ENCODE measurements at regions of chr11 and their contacts with region 1.

Region 1: GRCh38 chr11:2305140-2305840 is 3.5 kb downstream of the TSPAN32 start:
- DNase-seq: peak; percentile 87 to 92
- ATAC-seq: peak; percentile 87 to 94 (median 90)
- H3K4me3 ChIP-seq: no peak overlapping the region
- H3K27ac ChIP-seq: no peak overlapping the region
- H3K4me1 ChIP-seq: peaks cover 7% of the 10 kb centered on the region
- H3K27me3 ChIP-seq: no peaks in the 10 kb centered on the region
- CTCF ChIP-seq: peak; percentile 86

Region 2: DNA sequence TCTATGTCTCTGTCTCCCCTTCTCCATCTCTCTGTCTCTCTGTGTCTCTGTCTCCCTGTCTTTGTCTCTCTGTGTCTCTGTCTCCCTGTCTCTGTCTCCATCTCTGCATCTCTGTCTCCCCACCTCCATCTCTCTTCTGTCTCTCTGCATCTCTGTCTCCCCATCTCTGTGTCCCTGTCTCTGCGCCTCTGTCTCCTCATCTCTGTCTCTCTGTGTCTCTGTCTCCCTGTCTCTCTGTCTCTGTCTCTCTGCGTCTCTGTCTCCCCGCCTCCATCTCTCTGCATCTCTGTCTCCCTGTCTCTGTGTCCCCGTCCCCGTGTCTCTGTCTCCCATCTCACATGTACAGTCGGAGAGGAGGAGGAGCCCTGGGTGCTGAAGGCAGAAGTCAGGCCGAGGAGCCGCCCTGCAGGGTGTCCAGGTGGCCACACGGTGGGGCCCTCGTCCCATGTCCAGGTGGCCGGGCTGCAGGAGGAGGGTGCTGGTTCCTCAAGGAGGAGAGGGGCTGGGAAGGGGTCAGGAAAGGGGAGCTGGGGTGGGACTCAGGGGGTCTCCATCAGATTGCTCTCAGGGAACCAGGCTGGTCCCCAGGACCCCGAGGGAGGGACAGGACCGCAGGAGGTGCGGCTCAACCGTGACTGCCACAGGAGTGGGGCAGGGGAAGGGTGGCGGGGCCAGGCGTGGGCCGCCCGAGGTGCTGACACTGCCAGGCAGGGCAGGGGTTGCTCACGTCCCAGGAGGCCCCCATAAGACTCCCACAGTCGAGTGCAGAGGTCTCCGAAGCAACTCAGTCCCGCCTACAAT is 108.1 kb before region 1 on chr11:
- intact Hi-C with region 1: loop called in 1 of 2 experiments (anchors 10 kb)
- DNase-seq: peak; percentile 62 to 79
- ATAC-seq: peak; percentile 68 to 79 (median 74)
- H3K4me3 ChIP-seq: no peak overlapping the region
- H3K27ac ChIP-seq: no peak overlapping the region
- H3K4me1 ChIP-seq: no peaks in the 10 kb centered on the region
- H3K27me3 ChIP-seq: peaks cover 0 to 30% (median 5%) of the 10 kb centered on the region in 3 donors
- CTCF ChIP-seq: peak; percentile 70

Region 3: DNA sequence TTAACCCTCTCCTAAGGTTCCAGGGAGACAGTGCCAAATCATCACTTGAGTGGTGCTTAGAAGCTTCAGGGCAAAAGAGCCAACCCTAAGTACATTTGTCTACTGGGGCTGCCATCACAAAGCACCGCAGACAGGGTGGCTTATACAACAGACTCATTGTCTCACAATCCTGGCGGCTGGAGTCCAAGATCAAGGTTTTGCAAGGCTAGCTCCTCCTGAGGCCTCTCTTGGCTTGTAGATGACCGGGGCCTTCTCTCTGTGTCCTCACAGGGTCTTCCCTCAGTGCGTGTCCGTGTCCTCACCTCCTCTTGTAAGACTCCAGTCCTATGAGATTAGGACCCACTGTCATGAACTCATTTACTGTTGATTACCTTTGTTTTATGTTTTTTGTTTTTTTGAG is 37.7 kb after region 1 on chr11:
- intact Hi-C with region 1: loop called in 1 of 2 experiments (anchors 2 kb)
- DNase-seq: peak in 1 of 2 donors; percentile 34
- ATAC-seq: no peak
- H3K4me3 ChIP-seq: no peak overlapping the region
- H3K27ac ChIP-seq: no peak overlapping the region
- H3K4me1 ChIP-seq: no peaks in the 10 kb centered on the region
- H3K27me3 ChIP-seq: no peaks in the 10 kb centered on the region
- CTCF ChIP-seq: no peak

Region 4: GRCh38 chr11:2420502-2421225 is 115.4 kb after region 1 on chr11:
- intact Hi-C with region 1: loop called (anchors 1 kb)
- DNase-seq: peak; percentile 72 to 86
- ATAC-seq: peak; percentile 92 to 98 (median 96)
- H3K4me3 ChIP-seq: no peak overlapping the region
- H3K27ac ChIP-seq: no peak overlapping the region
- H3K4me1 ChIP-seq: no peaks in the 10 kb centered on the region
- H3K27me3 ChIP-seq: peaks cover 0 to 6% (median 0%) of the 10 kb centered on the region in 3 donors
- CTCF ChIP-seq: peak; percentile 94

Region 5: DNA sequence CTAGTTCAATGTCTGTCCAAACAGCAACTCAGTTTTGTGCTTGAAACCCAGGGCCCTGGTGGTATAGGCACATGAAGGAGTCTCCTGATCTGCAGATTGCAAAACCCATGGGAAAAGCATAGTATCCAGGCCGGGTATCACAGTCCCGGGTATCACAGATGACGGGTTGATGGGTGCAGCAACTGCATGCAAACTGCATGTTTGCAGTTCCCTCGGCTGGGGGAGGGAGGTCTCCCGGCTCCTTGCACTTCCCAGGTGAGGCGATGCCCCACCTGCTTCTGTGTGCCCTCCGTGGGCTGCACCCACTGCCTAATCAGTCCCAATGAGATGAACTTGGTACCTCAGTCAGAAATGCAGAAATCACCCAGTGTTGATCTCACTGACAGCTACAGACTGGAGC is 193.5 kb after region 1 on chr11:
- intact Hi-C with region 1: no loop called
- DNase-seq: no peak
- ATAC-seq: no peak
- H3K4me3 ChIP-seq: no peak overlapping the region
- H3K27ac ChIP-seq: no peak overlapping the region
- H3K4me1 ChIP-seq: no peaks in the 10 kb centered on the region
- H3K27me3 ChIP-seq: peaks cover 0 to 23% (median 2%) of the 10 kb centered on the region in 3 donors
- CTCF ChIP-seq: no peak

Region 6: GRCh38 chr11:2526808-2527381 is 221.6 kb after region 1 on chr11:
- intact Hi-C with region 1: loop called in 1 of 2 experiments (anchors 5 kb)
- DNase-seq: peak; percentile 47 to 68
- ATAC-seq: no peak
- H3K4me3 ChIP-seq: no peak overlapping the region
- H3K27ac ChIP-seq: no peak overlapping the region
- H3K4me1 ChIP-seq: no peaks in the 10 kb centered on the region
- H3K27me3 ChIP-seq: peaks cover 0 to 18% (median 3%) of the 10 kb centered on the region in 3 donors
- CTCF ChIP-seq: no peak

Region 7: DNA sequence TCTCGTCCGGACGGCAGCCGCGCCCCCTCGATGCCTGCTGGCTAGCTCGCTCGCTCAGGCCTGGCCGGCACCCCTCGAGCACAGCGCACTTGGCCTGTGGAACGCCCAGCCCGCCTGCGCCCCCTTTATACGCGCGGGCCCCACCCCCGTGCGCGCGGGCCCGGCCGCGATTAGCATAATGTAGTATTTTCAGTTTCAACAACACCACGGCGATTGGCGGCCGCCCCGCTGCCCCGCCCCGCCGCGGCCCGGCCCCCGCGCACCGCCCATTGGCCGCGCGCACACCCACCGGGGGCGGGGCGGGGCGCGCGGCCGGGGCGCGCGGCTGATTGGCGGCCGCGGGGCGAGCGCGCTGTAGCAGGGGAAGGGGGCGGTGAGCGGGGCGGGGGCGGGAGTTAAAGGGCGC is 580.4 kb after region 1 on chr11 and contains the start of gene CDKN1C:
- intact Hi-C with region 1: loop called (anchors 5 to 10 kb)
- DNase-seq: peak; percentile 89 to 93
- ATAC-seq: peak; percentile 81 to 84 (median 82)
- H3K4me3 ChIP-seq: peak within 1 kb of the TSS; percentile 88
- H3K27ac ChIP-seq: peak within 1 kb of the TSS; percentile 81
- H3K4me1 ChIP-seq: peaks cover 16% of the 10 kb centered on the region
- H3K27me3 ChIP-seq: no peaks in the 10 kb centered on the region
- CTCF ChIP-seq: no peak
- total RNA-seq, gene CDKN1C: 14.3 to 37.7 (median 27.9) TPM

Region 8: GRCh38 chr11:2892215-2893020 is 587.1 kb after region 1 on chr11:
- intact Hi-C with region 1: loop called (anchors 5 to 10 kb)
- DNase-seq: no peak
- ATAC-seq: peak; percentile 2 to 65 (median 46)
- H3K4me3 ChIP-seq: peak overlapping the region; percentile 52
- H3K27ac ChIP-seq: no peak overlapping the region
- H3K4me1 ChIP-seq: no peaks in the 10 kb centered on the region
- H3K27me3 ChIP-seq: no peaks in the 10 kb centered on the region
- CTCF ChIP-seq: peak; percentile 80

Measured in psoas muscle (tissue), 8 donors.